Activated CD4-positive, alpha-beta T cell treated with anti-CD3 and anti-CD28 coated beads for 36 hours (primary cell): ENCODE measurements at regions of chr6 and their contacts with region 1.

Region 1: DNA sequence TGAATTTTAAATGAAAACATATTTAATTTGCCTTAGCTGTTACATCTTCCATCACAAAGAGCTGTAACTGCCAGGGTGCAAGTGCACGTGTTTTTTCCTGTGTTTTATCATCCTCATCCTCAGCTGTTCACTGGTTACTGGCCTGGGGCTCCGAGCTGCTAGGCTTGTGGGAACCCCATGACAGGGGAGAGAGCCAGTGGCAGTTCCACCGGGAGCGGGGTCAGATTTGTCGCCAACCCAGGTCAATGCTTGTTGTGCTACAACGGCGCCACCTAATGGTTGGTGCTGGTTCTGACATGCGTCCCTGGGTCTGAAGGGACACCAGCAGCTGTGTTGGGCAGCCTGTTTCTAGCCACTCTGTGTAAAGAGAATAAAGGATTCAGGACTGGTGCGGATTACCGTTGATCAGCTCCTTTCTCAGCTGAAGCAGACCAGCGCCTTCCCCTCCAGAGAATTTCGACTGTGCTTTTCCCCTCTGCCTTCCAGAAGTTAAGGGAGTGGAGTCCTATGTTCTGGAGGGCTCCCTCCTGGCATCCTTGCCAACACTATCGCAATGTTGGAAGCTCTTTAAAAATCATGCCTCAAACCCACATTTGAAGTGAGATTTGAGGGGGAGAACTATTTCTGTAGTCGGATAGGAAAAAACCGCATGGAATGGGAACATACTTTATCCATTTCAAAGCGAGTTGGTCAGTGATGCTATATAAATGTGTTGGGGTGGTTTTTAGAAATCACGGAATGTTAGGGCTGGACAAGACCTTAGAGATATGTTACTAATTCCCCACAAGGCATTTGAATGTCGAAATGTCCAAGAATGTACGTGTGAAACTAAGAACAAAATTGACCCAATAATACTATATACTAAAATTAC is 32.1 kb downstream of the SUMO4 start:
- DNase-seq: peak; percentile 95
- ATAC-seq: peak; percentile 98
- H3K4me3 Mint-ChIP-seq: no peak overlapping the region
- H3K27ac Mint-ChIP-seq: peak overlapping the region; percentile 59
- H3K4me1 Mint-ChIP-seq: peaks cover 4% of the 10 kb centered on the region
- H3K27me3 Mint-ChIP-seq: no peaks in the 10 kb centered on the region

Region 2: DNA sequence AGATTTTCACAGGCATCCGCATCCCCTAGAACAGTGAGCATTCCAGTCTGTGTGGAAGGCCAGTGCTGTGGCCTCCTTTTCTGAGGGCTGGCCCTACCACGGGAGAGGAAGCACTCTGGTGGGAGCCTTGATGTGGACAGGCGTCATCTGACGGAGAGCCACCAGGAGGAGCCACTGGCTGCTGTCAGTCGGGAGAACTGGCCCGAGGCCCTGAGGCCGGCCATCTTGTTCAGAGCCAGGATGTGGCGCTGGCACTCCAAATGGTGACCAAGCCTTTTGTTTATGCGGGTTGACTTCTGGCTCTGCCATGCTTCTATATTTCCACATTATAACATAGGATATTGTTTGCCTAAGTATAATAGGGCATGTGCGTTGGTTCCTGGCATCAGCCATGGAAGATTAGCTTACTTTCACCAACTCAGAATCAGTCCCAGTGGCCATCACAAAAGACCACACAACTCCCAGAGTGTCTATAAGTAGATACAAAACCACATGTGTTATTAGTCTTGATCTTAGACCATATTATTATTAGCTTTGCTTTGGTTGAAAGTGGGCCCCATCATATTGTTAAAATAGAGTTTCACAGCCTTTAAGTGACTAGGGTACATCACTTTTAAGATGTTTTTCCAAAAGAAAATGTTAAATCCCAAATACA is 388.5 kb before region 1 on chr6:
- CTCF ChIA-PET with region 1: interaction called, 17 read pairs
- POLR2A ChIA-PET with region 1: no interaction called
- intact Hi-C with region 1: no loop called
- DNase-seq: peak; percentile 66
- ATAC-seq: peak; percentile 24
- H3K4me3 Mint-ChIP-seq: no peak overlapping the region
- H3K27ac Mint-ChIP-seq: no peak overlapping the region
- H3K4me1 Mint-ChIP-seq: peaks cover 46% of the 10 kb centered on the region
- H3K27me3 Mint-ChIP-seq: no peaks in the 10 kb centered on the region

Region 3: GRCh38 chr6:149094156-149094555 is 338.0 kb before region 1 on chr6:
- CTCF ChIA-PET with region 1: interaction called, 12 read pairs
- POLR2A ChIA-PET with region 1: no interaction called
- intact Hi-C with region 1: no loop called
- DNase-seq: peak; percentile 35
- ATAC-seq: peak; percentile 49
- H3K4me3 Mint-ChIP-seq: peak overlapping the region; percentile 23
- H3K27ac Mint-ChIP-seq: peak overlapping the region; percentile 84
- H3K4me1 Mint-ChIP-seq: peaks cover 38% of the 10 kb centered on the region
- H3K27me3 Mint-ChIP-seq: no peaks in the 10 kb centered on the region

Region 4: DNA sequence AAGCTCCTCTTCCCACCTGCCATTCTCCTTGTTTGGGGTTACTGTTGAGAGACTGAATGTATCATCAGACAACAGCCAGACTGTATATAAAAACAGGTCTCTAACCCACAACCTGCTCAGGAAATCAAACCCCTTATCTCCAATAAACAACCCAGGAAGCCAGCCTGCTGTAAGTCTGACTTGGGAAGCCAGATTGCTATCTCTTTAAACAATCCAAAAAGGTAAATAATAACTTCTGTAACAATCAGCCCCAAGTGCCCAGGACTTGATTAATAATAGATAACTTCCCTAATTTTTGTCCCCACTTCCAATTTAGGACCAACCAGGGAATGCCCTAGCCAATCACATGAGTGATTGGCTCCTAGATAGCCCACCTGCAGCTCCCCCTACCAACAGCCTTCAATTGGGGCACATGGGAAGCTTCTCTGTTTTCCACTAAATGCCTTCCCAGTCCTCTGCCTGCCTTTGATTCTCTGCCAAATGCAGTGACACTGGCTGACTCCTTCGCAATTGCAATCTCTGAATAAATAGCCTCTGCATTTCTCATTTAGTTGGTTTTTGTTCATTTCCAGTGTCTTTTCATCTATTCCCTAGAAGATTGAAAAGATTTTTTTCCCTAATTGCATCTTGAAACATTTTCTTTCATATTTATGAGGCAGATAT is 231.7 kb before region 1 on chr6:
- CTCF ChIA-PET with region 1: no interaction called
- POLR2A ChIA-PET with region 1: no interaction called
- intact Hi-C with region 1: no loop called
- DNase-seq: no peak
- ATAC-seq: no peak
- H3K4me3 Mint-ChIP-seq: no peak overlapping the region
- H3K27ac Mint-ChIP-seq: no peak overlapping the region
- H3K4me1 Mint-ChIP-seq: peaks cover 2% of the 10 kb centered on the region
- H3K27me3 Mint-ChIP-seq: no peaks in the 10 kb centered on the region

Region 5: DNA sequence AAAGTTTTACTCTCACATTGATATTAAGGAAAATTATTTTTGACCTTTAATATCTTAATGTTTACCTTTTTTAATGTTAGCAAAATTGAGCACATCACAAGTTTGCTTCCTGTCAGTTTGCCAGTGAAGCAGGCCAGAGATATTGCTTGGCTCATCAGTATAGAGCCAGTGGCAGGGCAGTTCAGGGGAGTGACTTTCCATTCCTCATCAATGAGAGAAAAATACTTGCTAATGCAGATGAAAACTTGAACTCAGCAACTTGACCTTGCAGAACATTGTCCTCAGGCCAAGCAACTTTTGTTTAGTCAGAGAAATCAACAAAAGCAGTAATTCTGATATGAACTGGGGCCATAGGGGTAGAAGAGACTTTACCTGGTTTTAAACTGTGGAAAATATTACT is 107.7 kb before region 1 on chr6:
- CTCF ChIA-PET with region 1: interaction called, 12 read pairs
- POLR2A ChIA-PET with region 1: no interaction called
- intact Hi-C with region 1: loop called in 1 of 2 experiments (anchors 2 kb)
- DNase-seq: peak; percentile 12
- ATAC-seq: peak; percentile 21
- H3K4me3 Mint-ChIP-seq: no peak overlapping the region
- H3K27ac Mint-ChIP-seq: peak overlapping the region; percentile 70
- H3K4me1 Mint-ChIP-seq: peaks cover 84% of the 10 kb centered on the region
- H3K27me3 Mint-ChIP-seq: no peaks in the 10 kb centered on the region

Region 6: DNA sequence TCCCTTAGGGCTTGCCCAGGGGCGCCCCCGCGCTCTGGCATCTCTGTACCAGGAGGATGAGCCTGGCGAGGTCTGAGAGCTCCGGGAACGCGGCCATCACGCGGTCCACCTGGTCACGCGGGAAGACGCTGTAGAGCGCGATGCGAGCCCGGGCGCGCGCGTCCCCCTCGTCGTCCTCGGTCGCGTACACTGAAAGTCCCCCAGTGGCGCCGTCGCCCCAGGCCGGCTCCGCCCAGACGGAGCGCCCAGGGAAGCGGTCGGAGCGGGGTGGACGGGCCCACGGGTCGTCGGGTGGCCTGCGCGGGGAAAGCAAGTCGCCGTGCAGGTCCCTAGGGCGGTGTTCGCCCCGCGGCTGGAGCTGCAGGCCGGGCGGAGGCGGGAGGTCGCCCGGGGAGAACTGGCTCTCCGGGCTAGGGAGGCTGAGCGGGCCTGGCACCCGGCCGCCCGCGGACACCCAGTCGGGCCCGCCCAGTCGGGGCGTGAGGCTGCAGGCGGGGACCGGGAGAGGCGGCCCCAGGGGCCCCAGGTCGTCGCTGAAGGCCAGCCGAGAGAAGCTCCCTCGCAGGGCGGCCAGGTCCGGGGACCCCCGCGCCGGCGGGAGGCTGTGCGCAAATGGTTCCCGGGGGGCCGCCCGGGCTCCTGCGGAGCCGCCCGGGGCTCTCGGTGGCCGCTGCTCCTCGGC is 18.7 kb after region 1 on chr6:
- CTCF ChIA-PET with region 1: interaction called, 11 read pairs
- POLR2A ChIA-PET with region 1: interaction called, 3 read pairs
- intact Hi-C with region 1: no loop called
- DNase-seq: no peak
- ATAC-seq: no peak
- H3K4me3 Mint-ChIP-seq: no peak overlapping the region
- H3K27ac Mint-ChIP-seq: no peak overlapping the region
- H3K4me1 Mint-ChIP-seq: peaks cover 4% of the 10 kb centered on the region
- H3K27me3 Mint-ChIP-seq: no peaks in the 10 kb centered on the region